B cell (primary cell): ENCODE measurements at regions of chr2 and their contacts with region 1.

Region 1: GRCh38 chr2:144516981-144517865 is 2.7 kb downstream of the ZEB2 start:
- DNase-seq: peak; percentile 75
- ATAC-seq: peak; percentile 48
- H3K4me3 ChIP-seq: peak overlapping the region; percentile 75 to 100 (median 94)
- H3K4me3 Mint-ChIP-seq: no peak overlapping the region
- H3K27ac ChIP-seq: peak overlapping the region; percentile 75 to 92
- H3K27ac Mint-ChIP-seq: no peak overlapping the region
- H3K4me1 ChIP-seq: peaks cover 31 to 49% of the 10 kb centered on the region in 2 donors
- H3K4me1 Mint-ChIP-seq: peaks cover 50% of the 10 kb centered on the region
- H3K27me3 ChIP-seq: peaks cover 0 to 3% (median under 1%) of the 10 kb centered on the region in 4 experiments
- H3K27me3 Mint-ChIP-seq: no peaks in the 10 kb centered on the region
- CTCF ChIP-seq: no peak

Region 2: GRCh38 chr2:144162652-144163051 is 354.6 kb before region 1 on chr2:
- CTCF ChIA-PET with region 1: no interaction called
- POLR2A ChIA-PET with region 1: interaction called, 4 read pairs
- intact Hi-C with region 1: loop called (anchors 5 kb)
- DNase-seq: peak; percentile 65
- ATAC-seq: peak; percentile 63
- H3K4me3 ChIP-seq: no peak overlapping the region
- H3K4me3 Mint-ChIP-seq: no peak overlapping the region
- H3K27ac ChIP-seq: no peak overlapping the region
- H3K27ac Mint-ChIP-seq: no peak overlapping the region
- H3K4me1 ChIP-seq: no peaks in the 10 kb centered on the region
- H3K4me1 Mint-ChIP-seq: peaks cover 4% of the 10 kb centered on the region
- H3K27me3 ChIP-seq: no peaks in the 10 kb centered on the region
- H3K27me3 Mint-ChIP-seq: no peaks in the 10 kb centered on the region
- CTCF ChIP-seq: peak; percentile 69

Region 3: GRCh38 chr2:144332356-144333142 is 184.7 kb before region 1 on chr2:
- CTCF ChIA-PET with region 1: interaction called, 3 read pairs
- POLR2A ChIA-PET with region 1: no interaction called
- intact Hi-C with region 1: loop called (anchors 1 kb)
- DNase-seq: peak; percentile 94
- ATAC-seq: peak; percentile 88
- H3K4me3 ChIP-seq: peak overlapping the region; percentile 43 to 86 (median 84)
- H3K4me3 Mint-ChIP-seq: peak overlapping the region; percentile 92
- H3K27ac ChIP-seq: peak overlapping the region in 1 of 2 donors; percentile 40
- H3K27ac Mint-ChIP-seq: peak overlapping the region; percentile 92
- H3K4me1 ChIP-seq: peaks cover 6 to 11% of the 10 kb centered on the region in 2 donors
- H3K4me1 Mint-ChIP-seq: peaks cover 21% of the 10 kb centered on the region
- H3K27me3 ChIP-seq: no peaks in the 10 kb centered on the region
- H3K27me3 Mint-ChIP-seq: no peaks in the 10 kb centered on the region
- CTCF ChIP-seq: no peak

Region 4: GRCh38 chr2:144505245-144505831 is 11.9 kb before region 1 on chr2:
- CTCF ChIA-PET with region 1: interaction called, 4 read pairs
- POLR2A ChIA-PET with region 1: no interaction called
- intact Hi-C with region 1: loop called (anchors 1 kb)
- DNase-seq: no peak
- ATAC-seq: peak; percentile 38
- H3K4me3 ChIP-seq: no peak overlapping the region
- H3K4me3 Mint-ChIP-seq: no peak overlapping the region
- H3K27ac ChIP-seq: peak overlapping the region in 1 of 2 donors; percentile 35
- H3K27ac Mint-ChIP-seq: peak overlapping the region; percentile 75
- H3K4me1 ChIP-seq: peaks cover 42 to 45% of the 10 kb centered on the region in 2 donors
- H3K4me1 Mint-ChIP-seq: peaks cover 70% of the 10 kb centered on the region
- H3K27me3 ChIP-seq: no peaks in the 10 kb centered on the region
- H3K27me3 Mint-ChIP-seq: no peaks in the 10 kb centered on the region
- CTCF ChIP-seq: no peak

Region 5: GRCh38 chr2:144560251-144560650 is 43.0 kb after region 1 on chr2:
- CTCF ChIA-PET with region 1: no interaction called
- POLR2A ChIA-PET with region 1: no interaction called
- intact Hi-C with region 1: loop called (anchors 5 kb)
- DNase-seq: no peak
- ATAC-seq: no peak
- H3K4me3 ChIP-seq: no peak overlapping the region
- H3K4me3 Mint-ChIP-seq: no peak overlapping the region
- H3K27ac ChIP-seq: no peak overlapping the region
- H3K27ac Mint-ChIP-seq: no peak overlapping the region
- H3K4me1 ChIP-seq: peaks cover 0 to 7% of the 10 kb centered on the region in 2 donors
- H3K4me1 Mint-ChIP-seq: peaks cover 15% of the 10 kb centered on the region
- H3K27me3 ChIP-seq: peaks cover 0 to 5% (median 0%) of the 10 kb centered on the region in 4 experiments
- H3K27me3 Mint-ChIP-seq: no peaks in the 10 kb centered on the region
- CTCF ChIP-seq: no peak

Region 6: DNA sequence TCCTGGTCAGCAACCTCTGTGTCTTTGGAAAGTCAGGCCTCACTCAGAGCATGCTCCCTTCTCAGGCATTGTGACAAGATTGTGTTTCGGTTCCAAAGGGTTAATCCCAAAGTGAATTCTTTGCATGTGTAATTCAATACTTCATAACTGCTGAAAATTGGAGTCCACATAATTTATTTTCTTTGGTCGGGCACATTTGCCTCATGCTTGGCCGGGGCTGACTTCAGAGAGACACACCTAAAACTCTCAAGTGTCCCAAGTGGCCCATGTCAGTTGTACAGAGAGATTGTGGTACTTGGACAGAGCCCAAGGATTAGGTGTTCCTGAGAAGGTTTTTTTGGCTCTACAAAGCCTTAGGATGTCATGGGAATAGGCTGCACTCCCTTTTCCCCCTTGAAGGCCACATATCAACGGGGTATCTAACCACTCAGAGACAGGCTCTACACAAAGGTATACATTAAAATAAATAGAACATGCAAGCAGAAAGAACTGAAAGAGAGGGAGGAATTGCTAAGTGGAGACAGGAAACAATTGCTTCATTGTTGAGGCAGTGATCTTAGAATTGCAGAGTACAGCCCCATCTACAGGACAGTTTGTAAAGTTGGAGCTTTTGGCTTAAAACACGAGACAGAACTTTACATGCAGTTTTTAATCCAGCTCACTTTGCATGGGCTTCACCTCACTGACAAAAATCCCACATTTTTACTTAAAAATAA is 1235.0 kb after region 1 on chr2:
- CTCF ChIA-PET with region 1: interaction called, 7 read pairs
- POLR2A ChIA-PET with region 1: no interaction called
- intact Hi-C with region 1: loop called (anchors 5 kb)
- DNase-seq: peak; percentile 70
- ATAC-seq: peak; percentile 52
- H3K4me3 ChIP-seq: no peak overlapping the region
- H3K4me3 Mint-ChIP-seq: peak overlapping the region; percentile 62
- H3K27ac ChIP-seq: no peak overlapping the region
- H3K27ac Mint-ChIP-seq: peak overlapping the region; percentile 84
- H3K4me1 ChIP-seq: peaks cover 39 to 45% of the 10 kb centered on the region in 2 donors
- H3K4me1 Mint-ChIP-seq: peaks cover 50% of the 10 kb centered on the region
- H3K27me3 ChIP-seq: no peaks in the 10 kb centered on the region
- H3K27me3 Mint-ChIP-seq: no peaks in the 10 kb centered on the region
- CTCF ChIP-seq: peak; percentile 80

Region 7: DNA sequence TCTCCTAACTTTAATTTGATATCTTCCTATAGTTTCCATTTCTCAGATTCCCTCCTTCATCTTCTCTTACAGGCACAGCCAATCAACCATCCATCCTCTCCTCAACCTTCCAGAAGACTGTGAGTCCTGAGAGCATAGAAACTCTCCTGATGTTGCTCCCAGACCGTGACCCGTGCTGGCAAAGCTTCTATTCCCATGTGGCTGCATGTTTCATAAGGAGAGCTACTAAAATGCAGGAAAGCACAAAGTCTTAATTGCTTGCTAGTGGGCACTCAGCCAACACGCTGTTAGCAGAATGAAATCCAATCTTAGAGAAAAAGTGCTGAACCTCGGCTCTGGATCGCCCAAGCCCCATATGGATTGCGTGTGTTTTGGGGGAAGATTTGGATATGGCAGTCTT is 1247.4 kb after region 1 on chr2:
- CTCF ChIA-PET with region 1: no interaction called
- POLR2A ChIA-PET with region 1: no interaction called
- intact Hi-C with region 1: no loop called
- DNase-seq: no peak
- ATAC-seq: no peak
- H3K4me3 ChIP-seq: no peak overlapping the region
- H3K4me3 Mint-ChIP-seq: no peak overlapping the region
- H3K27ac ChIP-seq: no peak overlapping the region
- H3K27ac Mint-ChIP-seq: no peak overlapping the region
- H3K4me1 ChIP-seq: no peaks in the 10 kb centered on the region
- H3K4me1 Mint-ChIP-seq: no peaks in the 10 kb centered on the region
- H3K27me3 ChIP-seq: no peaks in the 10 kb centered on the region
- H3K27me3 Mint-ChIP-seq: no peaks in the 10 kb centered on the region
- CTCF ChIP-seq: no peak